Dorsolateral prefrontal cortex (tissue), 120 donors: ENCODE measurements at regions of chr15 and their contacts with region 1.

Region 1: GRCh38 chr15:52568601-52569256 is at the start of gene ARPP19:
- DNase-seq: peak; percentile 69 to 93 (median 92)
- H3K4me3 ChIP-seq: peak within 1 kb of the TSS; percentile 58 to 98 (median 87)
- H3K27ac ChIP-seq: peak within 1 kb of the TSS; percentile 63 to 96 (median 91)
- H3K27me3 ChIP-seq: no peaks in the 10 kb centered on the region
- CTCF ChIP-seq: peak in 48 of 56 donors; percentile 2 to 68 (median 36)
- total RNA-seq, gene ARPP19: 228 to 624 (median 390) TPM

Region 2: DNA sequence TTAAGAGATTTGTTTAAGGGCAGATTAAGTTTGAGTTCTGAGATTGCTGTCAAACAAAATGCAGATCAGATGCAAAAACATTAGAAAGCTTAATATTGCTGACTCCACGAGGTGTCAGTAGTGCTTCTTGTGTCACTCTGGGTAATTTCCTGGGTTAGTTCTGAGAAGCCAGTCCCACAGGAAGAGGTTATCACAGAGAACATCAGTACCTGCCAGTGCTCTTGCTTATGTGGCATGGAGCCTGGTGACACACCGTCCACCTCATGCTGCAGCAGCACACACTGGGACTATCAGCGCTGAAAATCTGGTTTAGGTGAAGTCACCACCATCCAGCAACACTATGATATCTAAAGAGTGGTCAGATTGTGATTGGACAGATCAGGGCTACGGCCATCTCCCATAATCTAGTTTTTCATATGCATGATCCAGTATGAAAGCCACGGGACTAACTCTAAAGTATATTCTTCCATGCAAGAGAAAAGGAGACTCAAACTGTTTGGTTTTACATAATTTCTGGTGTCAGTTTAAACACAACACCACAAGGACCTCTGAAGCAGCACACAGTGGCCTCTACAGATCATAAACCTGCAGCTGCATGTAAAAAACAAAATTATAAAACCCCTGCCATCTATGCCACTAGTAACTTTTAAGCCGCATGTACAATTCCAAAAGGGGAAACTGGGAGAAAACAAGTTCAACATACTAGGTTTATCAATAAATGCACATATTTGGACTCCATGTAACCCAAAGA is 237.1 kb before region 1 on chr15:
- intact Hi-C with region 1: loop called (anchors 2 to 5 kb)
- DNase-seq: peak in 1 of 10 donors; percentile 41
- H3K4me3 ChIP-seq: no peak overlapping the region
- H3K27ac ChIP-seq: peak overlapping the region in 46 of 59 donors; percentile 0 to 71 (median 40)
- H3K27me3 ChIP-seq: no peaks in the 10 kb centered on the region
- CTCF ChIP-seq: peak in 54 of 56 donors; percentile 14 to 80 (median 52)

Region 3: GRCh38 chr15:52679232-52680040 is 110.7 kb after region 1 on chr15 and contains the start of gene ATOSA:
- intact Hi-C with region 1: loop called (anchors 2 kb)
- DNase-seq: peak; percentile 92 to 98 (median 96)
- H3K4me3 ChIP-seq: peak within 1 kb of the TSS; percentile 62 to 99 (median 90)
- H3K27ac ChIP-seq: peak within 1 kb of the TSS; percentile 77 to 99 (median 96)
- H3K27me3 ChIP-seq: no peaks in the 10 kb centered on the region
- CTCF ChIP-seq: peak in 38 of 56 donors; percentile 3 to 53 (median 30)
- total RNA-seq, gene ATOSA: 34.8 to 88.4 (median 52.9) TPM